ENCODE measurements at regions of chr20 and their contacts with region 1.

Region 1: DNA sequence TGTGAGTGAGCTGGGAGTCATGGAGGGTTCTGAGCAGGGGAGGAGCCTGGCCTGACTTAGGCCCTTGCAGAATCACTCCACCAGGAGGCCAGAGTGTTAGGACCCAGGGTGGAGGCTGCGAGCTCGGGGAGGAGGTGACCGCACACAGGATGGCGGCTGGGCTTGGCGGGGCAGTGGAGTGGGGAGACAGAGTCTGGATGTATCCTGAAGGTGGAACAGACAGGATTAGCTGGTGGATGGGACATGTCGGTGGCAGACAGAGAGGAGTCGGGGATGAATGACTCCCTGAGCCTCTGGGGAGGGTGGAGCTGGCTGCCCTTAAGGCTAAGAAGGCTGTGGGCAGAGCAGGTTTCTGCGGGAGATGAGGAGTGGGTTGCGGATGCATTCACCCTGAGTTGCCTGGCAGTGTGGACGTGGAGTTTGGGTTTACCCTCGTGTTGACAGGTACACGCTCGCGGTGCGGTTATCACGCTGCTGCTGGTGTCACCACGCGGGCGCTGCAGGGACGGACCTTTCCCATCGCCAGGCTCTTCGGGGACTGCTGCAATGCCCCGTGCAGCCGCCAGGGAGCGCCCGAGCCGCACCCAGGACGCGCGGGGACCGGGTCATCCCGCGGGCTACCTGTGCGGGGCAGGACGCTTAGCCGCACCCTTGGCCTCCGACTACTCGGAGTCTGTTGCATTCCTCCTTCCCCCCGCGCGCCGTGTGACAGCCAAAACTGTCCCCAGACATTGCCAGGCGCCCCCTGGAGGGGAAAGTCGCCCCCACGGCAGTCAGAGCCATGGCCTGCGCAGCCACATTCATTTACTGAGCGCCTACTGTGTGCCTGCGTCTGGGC is 43.0 kb upstream of the PTGIS start:
- DNase-seq: no peak
- H3K4me3 ChIP-seq: peak overlapping the region; percentile 46
- CTCF ChIP-seq: peak; percentile 95

Region 2: GRCh38 chr20:49338061-49338460 is 272.9 kb before region 1 on chr20:
- CTCF ChIA-PET with region 1: interaction called, 50 read pairs
- POLR2A ChIA-PET with region 1: no interaction called
- DNase-seq: no peak
- H3K4me3 ChIP-seq: no peak overlapping the region
- CTCF ChIP-seq: no peak

Region 3: GRCh38 chr20:49400904-49401303 is 210.0 kb before region 1 on chr20:
- CTCF ChIA-PET with region 1: no interaction called
- POLR2A ChIA-PET with region 1: no interaction called
- DNase-seq: peak; percentile 17
- H3K4me3 ChIP-seq: no peak overlapping the region
- CTCF ChIP-seq: no peak

Region 4: GRCh38 chr20:49541733-49542513 is 69.0 kb before region 1 on chr20:
- CTCF ChIA-PET with region 1: interaction called, 626 read pairs
- POLR2A ChIA-PET with region 1: interaction called, 4 read pairs
- DNase-seq: no peak
- H3K4me3 ChIP-seq: no peak overlapping the region
- CTCF ChIP-seq: peak; percentile 69

Region 5: DNA sequence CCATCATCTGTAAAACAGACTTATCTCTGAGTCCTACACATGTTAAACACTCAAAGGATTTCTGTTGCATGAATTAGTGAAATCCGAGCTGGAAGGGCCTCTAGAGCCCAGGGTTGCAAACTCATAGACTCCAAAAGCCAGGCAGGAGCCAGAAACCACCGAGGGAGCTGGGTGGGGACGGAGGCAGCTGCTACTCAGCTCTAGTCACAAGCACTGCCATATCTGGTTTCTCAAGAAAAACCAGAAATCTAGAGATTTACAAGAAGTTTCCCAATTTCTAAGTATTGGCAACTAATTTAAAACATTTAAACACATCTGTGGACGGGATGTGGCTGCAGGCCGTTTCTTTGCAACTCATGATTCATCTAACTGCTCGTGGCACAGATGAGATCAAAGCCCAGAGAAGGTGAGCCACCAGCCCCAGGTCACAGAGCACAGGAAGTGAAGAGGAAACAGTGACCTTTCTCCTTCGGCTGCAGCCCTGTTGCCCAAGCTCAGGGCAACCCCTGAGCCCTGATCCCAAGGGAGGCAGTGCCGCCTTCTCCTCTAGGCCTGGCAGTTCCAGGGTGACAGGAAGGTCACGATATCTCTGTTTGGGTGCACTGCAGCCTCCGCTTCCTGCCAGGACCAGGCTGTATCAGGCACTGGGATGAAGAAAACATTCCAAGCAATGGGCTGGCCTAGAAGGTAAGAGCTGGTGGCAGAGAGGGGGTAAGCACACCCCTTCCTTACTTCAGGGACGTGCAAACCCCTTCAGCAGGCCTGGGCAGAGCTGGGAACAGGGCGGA is 16.6 kb before region 1 on chr20:
- CTCF ChIA-PET with region 1: interaction called, 82 read pairs
- POLR2A ChIA-PET with region 1: no interaction called
- DNase-seq: no peak
- H3K4me3 ChIP-seq: no peak overlapping the region
- CTCF ChIP-seq: no peak

Region 6: DNA sequence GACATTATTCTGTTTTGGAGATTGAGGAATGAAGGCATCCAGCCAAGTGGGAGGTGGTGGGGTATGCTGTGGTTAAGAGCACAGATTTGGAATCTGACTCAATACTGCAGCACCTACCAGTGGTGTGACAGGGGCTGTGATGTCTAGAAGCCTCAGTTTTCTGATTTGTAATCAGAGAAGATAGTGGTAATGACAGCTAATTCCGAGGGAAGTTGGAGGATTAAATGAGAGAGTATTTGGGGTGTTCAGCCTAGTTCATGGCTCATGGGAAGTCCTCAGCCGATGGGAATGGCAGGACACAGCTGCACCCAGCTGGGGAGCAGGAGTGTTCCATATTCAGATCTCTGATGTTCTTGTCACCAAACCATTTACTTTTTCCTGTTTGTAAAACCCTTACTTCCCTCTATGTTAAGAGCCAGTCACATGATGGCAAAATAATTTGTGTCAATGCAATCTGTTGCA is 211.0 kb after region 1 on chr20:
- CTCF ChIA-PET with region 1: interaction called, 27 read pairs
- POLR2A ChIA-PET with region 1: no interaction called
- DNase-seq: no peak
- H3K4me3 ChIP-seq: no peak overlapping the region
- CTCF ChIP-seq: peak; percentile 46

Region 7: GRCh38 chr20:49880177-49880576 is 269.3 kb after region 1 on chr20:
- CTCF ChIA-PET with region 1: interaction called, 10 read pairs
- POLR2A ChIA-PET with region 1: no interaction called
- DNase-seq: peak; percentile 62
- H3K4me3 ChIP-seq: no peak overlapping the region
- CTCF ChIP-seq: no peak

Measured in AG04449 (cell line).